Psoas muscle (tissue), 8 donors: ENCODE measurements at regions of chr1 and their contacts with region 1.

Region 1: GRCh38 chr1:78004719-78005447 is at the start of gene DNAJB4:
- DNase-seq: no peak
- ATAC-seq: peak; percentile 96 to 99 (median 98)
- H3K4me3 ChIP-seq: peak within 1 kb of the TSS; percentile 69
- H3K27ac ChIP-seq: peak within 1 kb of the TSS; percentile 95
- H3K4me1 ChIP-seq: peaks cover 31% of the 10 kb centered on the region
- H3K27me3 ChIP-seq: no peaks in the 10 kb centered on the region
- CTCF ChIP-seq: no peak
- total RNA-seq, gene DNAJB4: 98.8 to 209 (median 146) TPM

Region 2: DNA sequence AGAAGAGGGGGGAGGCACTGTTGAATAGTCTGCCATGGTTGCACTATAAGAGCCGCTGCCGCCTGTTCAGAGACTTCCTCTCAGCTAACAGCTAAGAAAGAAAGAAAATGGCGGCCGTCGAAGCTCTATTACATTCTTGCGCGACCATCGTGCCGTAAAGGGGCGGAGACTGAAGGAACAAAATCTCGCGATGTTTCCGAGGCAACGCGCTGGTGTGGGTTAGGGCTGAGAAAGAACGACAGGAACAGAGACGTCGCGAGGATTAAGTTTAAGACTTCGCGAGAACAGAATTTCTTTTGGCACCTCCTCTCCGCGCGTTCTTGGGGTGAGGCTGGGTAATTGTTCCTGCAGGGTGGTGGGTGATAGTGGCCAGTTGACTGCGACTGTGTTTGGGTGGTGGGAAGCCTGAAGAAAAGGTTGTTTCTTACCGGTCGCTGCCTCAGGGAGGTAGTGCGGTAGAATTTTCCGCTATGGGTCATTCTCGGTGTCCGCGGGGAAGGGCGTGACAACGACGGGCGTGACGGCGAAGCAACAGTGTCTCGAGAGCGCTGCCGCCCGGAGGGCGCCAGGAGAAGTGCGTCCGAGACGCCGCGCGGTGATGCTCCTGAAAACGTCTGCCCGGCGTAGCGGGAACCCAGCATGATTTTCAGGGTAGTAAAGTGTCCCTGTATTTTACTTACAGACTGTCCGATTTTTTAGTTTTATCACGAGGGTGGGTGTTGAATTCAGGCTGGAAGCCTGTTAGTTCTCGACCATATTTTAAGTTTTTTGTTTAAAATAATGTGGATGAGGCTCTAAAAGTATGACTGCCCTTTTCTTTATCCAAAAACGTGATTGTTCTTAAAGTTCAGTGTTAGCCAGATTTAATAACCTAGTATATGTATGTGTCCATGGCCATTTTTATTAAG is 25.7 kb before region 1 on chr1 and contains the start of gene FUBP1:
- intact Hi-C with region 1: loop called in 1 of 2 experiments (anchors 1 kb)
- DNase-seq: peak; percentile 92 to 95
- ATAC-seq: peak; percentile 90 to 93 (median 92)
- H3K4me3 ChIP-seq: peak within 1 kb of the TSS; percentile 83
- H3K27ac ChIP-seq: peak within 1 kb of the TSS; percentile 96
- H3K4me1 ChIP-seq: peaks cover 47% of the 10 kb centered on the region
- H3K27me3 ChIP-seq: no peaks in the 10 kb centered on the region
- CTCF ChIP-seq: peak; percentile 76
- total RNA-seq, gene FUBP1: 48.8 to 72.1 (median 63.7) TPM

Region 3: DNA sequence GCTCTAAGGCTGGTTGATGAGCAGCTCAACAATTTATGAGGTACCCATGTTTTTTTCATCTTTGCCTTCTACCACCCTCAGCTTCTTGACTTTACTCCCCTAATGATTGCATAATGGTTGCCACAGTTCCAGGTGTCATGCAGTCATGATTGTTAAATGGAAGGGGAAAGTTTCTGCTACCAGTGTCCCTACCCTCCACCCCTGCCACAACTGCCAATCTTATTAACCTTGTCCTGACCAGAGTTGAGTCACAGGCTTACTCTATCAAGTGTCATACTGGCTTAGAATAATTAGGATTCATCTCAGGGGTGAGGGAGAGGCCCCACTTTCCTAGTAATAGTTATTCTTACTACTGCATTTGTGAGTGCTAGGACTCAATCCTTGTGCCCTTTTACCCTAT is 18.1 kb before region 1 on chr1:
- intact Hi-C with region 1: loop called in 1 of 2 experiments (anchors 2 kb)
- DNase-seq: no peak
- ATAC-seq: peak; percentile 39 to 79 (median 56)
- H3K4me3 ChIP-seq: no peak overlapping the region
- H3K27ac ChIP-seq: no peak overlapping the region
- H3K4me1 ChIP-seq: peaks cover 35% of the 10 kb centered on the region
- H3K27me3 ChIP-seq: no peaks in the 10 kb centered on the region
- CTCF ChIP-seq: no peak

Region 4: GRCh38 chr1:78028976-78029375 is 24.1 kb after region 1 on chr1:
- intact Hi-C with region 1: no loop called
- DNase-seq: no peak
- ATAC-seq: no peak
- H3K4me3 ChIP-seq: no peak overlapping the region
- H3K27ac ChIP-seq: no peak overlapping the region
- H3K4me1 ChIP-seq: no peaks in the 10 kb centered on the region
- H3K27me3 ChIP-seq: no peaks in the 10 kb centered on the region
- CTCF ChIP-seq: no peak

Region 5: DNA sequence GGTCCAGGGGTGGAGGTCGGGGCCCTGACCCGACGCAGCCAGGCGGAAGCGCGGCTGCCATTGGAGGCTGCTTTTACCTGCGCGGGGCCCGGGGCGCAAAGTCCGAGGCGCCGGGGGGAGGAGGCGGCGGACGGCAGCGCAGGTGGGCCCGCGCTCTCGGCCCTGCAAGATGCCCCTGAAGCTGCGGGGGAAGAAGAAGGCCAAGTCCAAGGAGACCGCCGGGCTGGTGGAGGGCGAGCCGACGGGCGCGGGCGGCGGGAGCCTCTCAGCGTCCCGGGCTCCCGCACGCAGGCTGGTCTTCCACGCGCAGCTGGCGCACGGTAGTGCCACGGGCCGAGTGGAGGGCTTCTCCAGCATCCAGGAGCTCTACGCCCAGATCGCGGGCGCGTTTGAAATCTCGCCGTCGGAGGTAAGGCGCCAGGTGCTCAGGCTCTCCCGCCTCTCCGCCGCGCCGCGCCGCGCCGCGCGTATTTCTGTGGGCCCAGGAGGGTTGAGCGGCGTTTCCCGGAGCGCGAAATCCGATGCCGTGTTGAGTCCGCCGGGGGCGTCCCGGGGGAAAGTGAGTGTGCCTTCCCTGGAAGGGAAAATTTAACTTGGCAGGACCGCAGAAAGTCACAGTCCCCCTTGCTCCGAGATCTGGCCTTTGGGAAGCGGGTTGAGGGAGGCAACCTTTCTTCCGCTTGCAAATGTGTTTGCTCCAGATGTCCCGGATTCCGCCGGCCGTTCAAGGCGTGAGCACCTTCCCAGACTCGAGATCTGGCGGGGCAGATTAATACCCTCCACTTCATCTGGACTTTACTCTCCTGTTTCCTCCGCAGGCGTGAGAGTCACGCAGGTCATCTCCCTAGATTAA is 41.3 kb after region 1 on chr1 and contains the start of gene GIPC2:
- intact Hi-C with region 1: loop called (anchors 5 kb)
- DNase-seq: peak; percentile 49 to 73
- ATAC-seq: peak; percentile 78 to 86 (median 82)
- H3K4me3 ChIP-seq: peak within 1 kb of the TSS; percentile 79
- H3K27ac ChIP-seq: peak within 1 kb of the TSS; percentile 77
- H3K4me1 ChIP-seq: peaks cover 22% of the 10 kb centered on the region
- H3K27me3 ChIP-seq: no peaks in the 10 kb centered on the region
- CTCF ChIP-seq: no peak
- total RNA-seq, gene GIPC2: 1.2 to 1.6 (median 1.4) TPM

Region 6: DNA sequence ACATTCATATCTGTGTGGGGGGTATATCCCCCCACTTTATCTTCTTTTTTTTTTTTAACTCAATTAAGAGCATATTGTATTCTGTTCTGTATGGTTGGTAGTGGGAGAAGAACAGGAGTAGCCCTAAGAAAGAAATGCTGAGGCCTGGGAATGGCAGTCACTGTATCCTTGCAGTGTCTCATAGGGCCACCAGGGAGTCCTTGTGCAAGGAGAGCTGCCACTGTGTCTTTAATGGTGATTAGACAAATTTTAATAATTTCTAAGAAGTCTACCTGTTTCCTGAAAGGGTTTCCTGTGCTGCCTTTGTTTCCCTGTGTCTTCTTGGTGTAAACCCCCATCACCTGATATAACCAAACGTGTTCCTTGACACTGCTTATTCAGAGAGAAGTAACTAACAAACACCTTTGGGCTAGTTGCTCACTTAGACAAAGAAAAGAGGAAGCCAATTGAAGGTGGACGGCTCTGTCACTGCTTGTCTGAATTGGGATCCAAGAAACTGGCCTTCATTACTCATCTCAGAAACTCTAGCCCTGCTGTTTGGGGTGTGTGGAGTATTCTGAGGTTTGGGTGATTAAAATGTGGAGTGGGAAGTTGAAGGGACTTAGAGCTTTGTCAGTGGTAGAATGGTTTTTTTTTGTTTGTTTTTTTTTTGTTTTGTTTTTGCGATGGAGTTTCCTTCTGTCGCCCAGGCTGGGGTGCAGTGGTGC is 56.1 kb after region 1 on chr1:
- intact Hi-C with region 1: loop called in 1 of 2 experiments (anchors 5 kb)
- DNase-seq: no peak
- ATAC-seq: peak in 3 of 4 donors; percentile 16 to 24 (median 24)
- H3K4me3 ChIP-seq: no peak overlapping the region
- H3K27ac ChIP-seq: peak overlapping the region; percentile 73
- H3K4me1 ChIP-seq: peaks cover 14% of the 10 kb centered on the region
- H3K27me3 ChIP-seq: no peaks in the 10 kb centered on the region
- CTCF ChIP-seq: peak; percentile 6